ENCODE measurements at regions of chr12 and their contacts with region 1.

Region 1: GRCh38 chr12:21657326-21658077 is at the start of gene LDHB:
- DNase-seq: peak; percentile 99
- H3K4me3 ChIP-seq: peak within 1 kb of the TSS; percentile 76
- H3K27ac ChIP-seq: peak within 1 kb of the TSS; percentile 86
- H3K4me1 ChIP-seq: peaks cover 19% of the 10 kb centered on the region
- H3K27me3 ChIP-seq: no peaks in the 10 kb centered on the region
- CTCF ChIP-seq: no peak
- total RNA-seq, gene LDHB: 1,201 and 1,223 TPM in 2 replicates

Region 2: DNA sequence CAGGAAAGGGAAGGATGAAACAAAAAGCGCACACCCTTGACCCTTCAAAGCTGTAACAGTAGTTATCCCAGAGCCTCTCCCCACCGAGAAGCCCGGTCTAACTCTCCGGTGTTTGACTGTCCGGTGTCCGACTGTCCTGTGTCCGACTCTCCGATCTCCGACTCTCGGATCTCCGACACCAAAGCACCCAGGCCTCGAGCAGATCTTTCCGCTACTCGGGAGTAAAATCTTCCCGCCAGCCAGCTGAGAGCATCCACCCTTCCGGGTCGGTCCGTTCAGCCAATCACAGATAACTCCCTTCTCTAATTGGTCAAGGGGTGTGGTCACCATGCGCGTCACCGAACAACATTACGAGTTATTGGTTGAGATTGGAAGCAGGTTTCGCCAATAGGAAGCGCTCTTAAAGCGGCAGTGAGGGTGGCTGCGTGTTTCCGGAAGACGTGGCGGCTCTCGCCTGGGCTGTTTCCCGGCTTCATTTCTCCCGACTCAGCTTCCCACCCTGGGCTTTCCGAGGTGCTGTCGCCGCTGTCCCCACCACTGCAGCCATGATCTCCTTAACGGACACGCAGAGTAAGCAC is 156.0 kb before region 1 on chr12 and contains the starts of genes GOLT1B and RECQL:
- CTCF ChIA-PET with region 1: no interaction called
- POLR2A ChIA-PET with region 1: no interaction called
- intact Hi-C with region 1: loop called (anchors 5 kb)
- DNase-seq: peak; percentile 98
- H3K4me3 ChIP-seq: peak within 1 kb of the TSS; percentile 97
- H3K27ac ChIP-seq: peak within 1 kb of the TSS; percentile 93
- H3K4me1 ChIP-seq: peaks cover 19% of the 10 kb centered on the region
- H3K27me3 ChIP-seq: no peaks in the 10 kb centered on the region
- CTCF ChIP-seq: no peak
- total RNA-seq, gene GOLT1B: 26.6 and 31.4 TPM in 2 replicates
- total RNA-seq, gene RECQL: 38.2 and 39.3 TPM in 2 replicates

Measured in A673 (cell line).